ENCODE measurements at regions of chr5 and their contacts with region 1.

Region 1: GRCh38 chr5:181243512-181244343 is at the start of gene RACK1:
- DNase-seq: peak; percentile 94
- H3K4me3 Mint-ChIP-seq: peak within 1 kb of the TSS; percentile 95
- H3K27ac Mint-ChIP-seq: peak within 1 kb of the TSS; percentile 99
- H3K4me1 Mint-ChIP-seq: peaks cover 60% of the 10 kb centered on the region
- H3K27me3 Mint-ChIP-seq: no peaks in the 10 kb centered on the region
- total RNA-seq, gene RACK1: 3,176 to 3,362 TPM

Region 2: GRCh38 chr5:180810210-180810958 is 433.3 kb before region 1 on chr5:
- CTCF ChIA-PET with region 1: no interaction called
- intact Hi-C with region 1: loop called (anchors 1 kb)
- DNase-seq: peak; percentile 96
- H3K4me3 Mint-ChIP-seq: peak overlapping the region; percentile 98
- H3K27ac Mint-ChIP-seq: peak overlapping the region; percentile 99
- H3K4me1 Mint-ChIP-seq: peaks cover 69% of the 10 kb centered on the region
- H3K27me3 Mint-ChIP-seq: no peaks in the 10 kb centered on the region

Region 3: DNA sequence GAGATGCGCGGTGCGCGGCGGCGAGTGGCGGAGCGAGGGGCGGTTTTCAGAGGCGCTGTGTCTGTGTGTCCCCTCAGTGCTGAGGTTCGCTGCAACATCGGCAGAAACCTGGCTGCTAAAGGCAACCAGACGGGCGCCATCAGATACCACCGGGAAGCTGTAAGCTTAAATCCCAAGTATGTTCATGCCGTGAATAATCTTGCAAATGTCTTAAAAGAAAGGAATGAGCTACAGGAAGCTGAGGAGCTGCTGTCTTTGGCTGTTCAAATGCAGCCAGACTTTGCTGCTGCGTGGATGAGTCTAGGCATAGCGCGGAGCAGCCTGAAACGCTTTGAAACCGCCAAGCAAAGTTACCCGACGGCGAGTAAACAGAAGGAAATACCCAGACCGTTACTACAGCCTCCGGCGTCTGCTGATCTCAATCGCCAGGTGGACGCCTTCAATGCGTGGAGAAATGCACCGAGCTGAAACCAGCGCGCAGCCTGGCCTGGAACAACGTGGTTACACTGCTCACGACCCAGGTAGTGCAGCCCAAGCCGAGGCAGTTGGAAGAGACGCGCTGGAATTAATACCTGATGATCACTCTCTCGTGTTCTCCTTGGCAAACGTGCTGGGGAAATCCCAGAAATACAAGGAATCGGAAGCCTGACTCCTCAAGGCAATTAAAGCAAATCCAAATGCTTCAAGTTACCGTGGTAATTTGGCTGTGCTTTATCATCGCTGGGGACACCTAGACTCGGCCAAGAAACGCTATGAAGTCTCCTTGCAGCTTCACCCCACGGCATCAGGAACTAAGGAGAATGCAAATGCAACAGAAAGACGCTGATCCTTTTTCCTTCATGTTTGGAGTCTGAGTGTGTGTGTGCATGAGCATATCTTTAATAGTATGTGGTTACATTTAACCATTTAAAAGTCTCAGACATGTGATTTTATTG is 128.6 kb before region 1 on chr5:
- CTCF ChIA-PET with region 1: no interaction called
- intact Hi-C with region 1: no loop called
- DNase-seq: peak; percentile 12
- H3K4me3 Mint-ChIP-seq: peak overlapping the region; percentile 18
- H3K27ac Mint-ChIP-seq: no peak overlapping the region
- H3K4me1 Mint-ChIP-seq: peaks cover 4% of the 10 kb centered on the region
- H3K27me3 Mint-ChIP-seq: peaks cover 72% of the 10 kb centered on the region

Region 4: GRCh38 chr5:181182651-181183050 is 61.1 kb before region 1 on chr5:
- CTCF ChIA-PET with region 1: no interaction called
- intact Hi-C with region 1: no loop called
- DNase-seq: no peak
- H3K4me3 Mint-ChIP-seq: peak overlapping the region; percentile 78
- H3K27ac Mint-ChIP-seq: peak overlapping the region; percentile 74
- H3K4me1 Mint-ChIP-seq: peaks cover 20% of the 10 kb centered on the region
- H3K27me3 Mint-ChIP-seq: peaks cover 4% of the 10 kb centered on the region

Region 5: DNA sequence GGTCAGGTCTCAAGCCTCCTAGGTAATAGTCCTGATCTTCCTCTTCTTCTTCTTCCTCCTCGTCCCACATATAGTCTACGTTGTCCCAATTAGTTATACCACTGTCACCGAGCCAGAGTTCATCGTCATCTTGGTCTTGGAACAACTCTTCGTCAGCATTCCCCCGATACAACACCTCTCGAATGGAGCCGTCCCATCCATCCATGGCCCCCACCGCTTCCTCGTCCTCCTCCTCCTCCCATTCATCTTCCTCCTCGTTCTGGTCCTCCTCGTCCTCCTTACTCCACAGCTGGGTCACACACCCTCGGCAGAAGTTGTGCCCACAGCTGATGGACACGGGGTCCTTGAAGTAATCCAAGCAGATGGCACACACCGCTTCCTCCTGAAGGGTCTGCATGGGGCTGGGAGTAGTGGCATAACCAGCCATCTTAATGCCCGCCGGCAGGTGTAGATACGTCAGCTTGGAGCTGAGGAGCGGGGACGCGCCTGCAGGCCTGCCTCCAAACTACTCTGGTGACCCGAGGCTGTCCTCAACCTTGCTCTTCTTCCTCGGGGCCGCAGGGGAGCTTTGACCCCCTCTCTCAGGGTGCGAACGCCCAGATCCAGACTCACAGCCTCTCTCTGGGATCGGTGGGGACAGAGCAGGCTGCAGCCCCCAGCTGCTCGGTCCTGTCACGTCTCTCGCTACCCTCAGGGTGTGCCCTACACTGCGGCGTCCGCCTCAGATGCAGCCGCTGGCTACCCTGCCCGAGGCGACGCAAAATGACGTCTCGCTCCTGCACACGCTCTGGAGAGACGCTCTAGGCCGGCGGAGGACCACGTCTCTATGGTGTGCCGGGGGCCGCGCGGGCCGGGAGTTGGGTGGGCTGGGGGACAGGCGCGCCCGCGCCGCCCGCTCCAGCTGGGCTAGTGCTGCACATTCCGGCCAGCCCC is 16.9 kb after region 1 on chr5 and contains the start of gene TRIM52:
- CTCF ChIA-PET with region 1: interaction called, 4 read pairs
- intact Hi-C with region 1: loop called (anchors 1 kb)
- DNase-seq: peak; percentile 91
- H3K4me3 Mint-ChIP-seq: peak within 1 kb of the TSS; percentile 92
- H3K27ac Mint-ChIP-seq: peak within 1 kb of the TSS; percentile 94
- H3K4me1 Mint-ChIP-seq: peaks cover 37% of the 10 kb centered on the region
- H3K27me3 Mint-ChIP-seq: no peaks in the 10 kb centered on the region
- total RNA-seq, gene TRIM52: 10.5 to 10.9 TPM

Measured in activated naive CD4-positive, alpha-beta T cell treated with anti-CD3 and anti-CD28 coated beads for 36 hours (primary cell).